CD8-positive, alpha-beta T cell (primary cell): ENCODE measurements at regions of chr22 and their contacts with region 1.

Region 1: GRCh38 chr22:31080848-31081649 is at the start of gene SMTN:
- DNase-seq: peak; percentile 75 to 94 (median 90)
- ATAC-seq: peak; percentile 72
- H3K4me3 ChIP-seq: peak within 1 kb of the TSS; percentile 73 to 81
- H3K4me3 Mint-ChIP-seq: peak within 1 kb of the TSS; percentile 88
- H3K27ac ChIP-seq: no peak within 1 kb of the TSS
- H3K27ac Mint-ChIP-seq: peak within 1 kb of the TSS; percentile 37
- H3K4me1 ChIP-seq: peaks cover 32% of the 10 kb centered on the region
- H3K4me1 Mint-ChIP-seq: peaks cover 36% of the 10 kb centered on the region
- H3K27me3 ChIP-seq: no peaks in the 10 kb centered on the region
- H3K27me3 Mint-ChIP-seq: no peaks in the 10 kb centered on the region
- CTCF ChIP-seq: no peak
- total RNA-seq, gene SMTN: 4.0 to 4.9 TPM

Region 2: GRCh38 chr22:30356449-30357235 is 724.4 kb before region 1 on chr22 and contains the starts of genes CCDC157 and SF3A1:
- CTCF ChIA-PET with region 1: no interaction called
- POLR2A ChIA-PET with region 1: no interaction called
- intact Hi-C with region 1: loop called in 1 of 2 experiments (anchors 10 kb)
- DNase-seq: peak; percentile 74 to 96 (median 87)
- ATAC-seq: peak; percentile 83
- H3K4me3 ChIP-seq: peak within 1 kb of the TSS; percentile 73 to 94
- H3K4me3 Mint-ChIP-seq: peak within 1 kb of the TSS; percentile 92
- H3K27ac ChIP-seq: peak within 1 kb of the TSS; percentile 93 to 99
- H3K27ac Mint-ChIP-seq: peak within 1 kb of the TSS; percentile 93
- H3K4me1 ChIP-seq: peaks cover 44% of the 10 kb centered on the region
- H3K4me1 Mint-ChIP-seq: peaks cover 48% of the 10 kb centered on the region
- H3K27me3 ChIP-seq: no peaks in the 10 kb centered on the region
- H3K27me3 Mint-ChIP-seq: no peaks in the 10 kb centered on the region
- CTCF ChIP-seq: no peak
- total RNA-seq, gene CCDC157: 8.7 to 11.7 TPM
- total RNA-seq, gene SF3A1: 406 to 422 TPM

Region 3: GRCh38 chr22:30634471-30635233 is 446.4 kb before region 1 on chr22:
- CTCF ChIA-PET with region 1: interaction called, 35 read pairs
- POLR2A ChIA-PET with region 1: no interaction called
- intact Hi-C with region 1: loop called (anchors 1 kb)
- DNase-seq: peak; percentile 75 to 95 (median 90)
- ATAC-seq: peak; percentile 64
- H3K4me3 ChIP-seq: peak overlapping the region; percentile 60 to 87
- H3K4me3 Mint-ChIP-seq: peak overlapping the region; percentile 81
- H3K27ac ChIP-seq: peak overlapping the region; percentile 32 to 89
- H3K27ac Mint-ChIP-seq: peak overlapping the region; percentile 91
- H3K4me1 ChIP-seq: peaks cover 31% of the 10 kb centered on the region
- H3K4me1 Mint-ChIP-seq: peaks cover 22% of the 10 kb centered on the region
- H3K27me3 ChIP-seq: no peaks in the 10 kb centered on the region
- H3K27me3 Mint-ChIP-seq: no peaks in the 10 kb centered on the region
- CTCF ChIP-seq: peak; percentile 80

Region 4: DNA sequence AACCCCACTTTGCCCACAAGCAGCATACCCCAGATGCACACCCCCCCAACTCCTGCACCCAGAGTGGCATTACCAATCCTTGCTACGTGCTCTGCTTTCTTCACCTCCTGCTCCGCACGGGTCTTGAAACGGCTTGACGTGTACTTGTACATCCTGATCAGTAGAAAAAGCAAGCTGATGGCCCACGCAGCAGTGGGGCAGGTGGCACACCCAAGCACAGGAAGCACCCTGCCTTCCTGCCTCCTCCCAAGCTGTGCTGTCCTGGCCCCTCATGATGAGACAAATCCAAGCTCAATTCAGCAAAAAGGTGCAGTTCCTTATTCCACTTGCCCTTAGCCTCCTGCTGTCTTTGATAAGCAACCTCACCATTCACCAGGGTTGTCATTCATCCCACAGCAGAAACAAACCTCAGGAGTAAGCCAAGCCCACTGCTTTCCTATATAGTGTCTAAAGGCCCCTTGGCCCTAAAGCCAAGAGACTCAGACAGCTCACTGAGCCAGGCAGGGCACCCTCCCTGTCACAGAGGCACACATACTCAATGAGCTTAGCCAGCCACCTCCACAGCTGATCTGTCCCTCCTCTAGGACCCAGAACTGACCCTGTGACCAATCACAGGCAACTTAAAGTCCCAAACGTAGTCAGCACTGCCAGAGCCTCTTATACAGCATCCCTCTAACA is 140.2 kb before region 1 on chr22:
- CTCF ChIA-PET with region 1: interaction called, 52 read pairs
- POLR2A ChIA-PET with region 1: interaction called, 8 read pairs
- intact Hi-C with region 1: loop called (anchors 1 to 2 kb)
- DNase-seq: peak in 8 of 9 experiments; percentile 35 to 79 (median 48)
- ATAC-seq: peak; percentile 74
- H3K4me3 ChIP-seq: peak overlapping the region; percentile 38
- H3K4me3 Mint-ChIP-seq: peak overlapping the region; percentile 77
- H3K27ac ChIP-seq: peak overlapping the region; percentile 60 to 78
- H3K27ac Mint-ChIP-seq: peak overlapping the region; percentile 90
- H3K4me1 ChIP-seq: peaks cover 74% of the 10 kb centered on the region
- H3K4me1 Mint-ChIP-seq: peaks cover 87% of the 10 kb centered on the region
- H3K27me3 ChIP-seq: no peaks in the 10 kb centered on the region
- H3K27me3 Mint-ChIP-seq: no peaks in the 10 kb centered on the region
- CTCF ChIP-seq: no peak

Region 5: DNA sequence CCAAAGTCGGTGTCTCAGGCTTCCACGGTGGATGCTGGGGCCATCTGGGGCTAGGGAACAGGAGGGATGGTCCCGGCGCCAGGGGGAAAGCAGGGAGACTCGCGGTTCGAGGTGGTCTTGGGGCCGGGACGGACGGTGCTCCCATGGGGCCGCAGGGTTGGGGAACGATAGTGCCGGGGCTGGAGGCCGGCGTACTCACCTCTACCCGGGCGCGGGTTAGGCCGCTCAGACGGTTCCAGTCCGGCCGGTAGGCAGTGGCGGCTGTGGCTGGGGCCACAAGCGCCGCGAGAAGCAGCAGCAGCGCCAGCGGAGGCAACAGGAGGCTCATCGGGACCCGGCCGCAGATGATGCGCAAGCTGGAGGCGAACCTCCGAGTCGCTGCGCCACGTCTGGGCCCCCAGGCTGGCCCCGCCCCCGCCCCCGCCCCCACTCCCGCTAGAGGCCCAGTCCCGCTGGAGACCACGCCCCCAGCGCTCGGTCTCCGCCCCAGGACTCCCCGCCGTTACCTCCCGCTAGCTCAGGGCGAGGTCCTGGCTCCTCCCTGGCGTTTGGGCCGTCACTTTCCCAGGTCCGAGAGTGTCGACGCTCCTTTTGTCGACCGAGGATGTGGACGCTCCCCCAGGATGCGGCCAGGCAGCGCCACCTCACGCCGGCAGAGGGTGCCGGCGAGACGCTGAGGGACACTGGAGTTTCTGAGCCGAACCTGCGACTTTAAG is 26.3 kb after region 1 on chr22 and contains the start of gene SELENOM:
- CTCF ChIA-PET with region 1: interaction called, 4 read pairs
- POLR2A ChIA-PET with region 1: interaction called, 4 read pairs
- intact Hi-C with region 1: loop called (anchors 1 kb)
- DNase-seq: peak; percentile 69 to 94 (median 85)
- ATAC-seq: peak; percentile 96
- H3K4me3 ChIP-seq: peak within 1 kb of the TSS; percentile 80 to 84
- H3K4me3 Mint-ChIP-seq: peak within 1 kb of the TSS; percentile 98
- H3K27ac ChIP-seq: peak within 1 kb of the TSS; percentile 72 to 80
- H3K27ac Mint-ChIP-seq: peak within 1 kb of the TSS; percentile 91
- H3K4me1 ChIP-seq: peaks cover 17% of the 10 kb centered on the region
- H3K4me1 Mint-ChIP-seq: peaks cover 25% of the 10 kb centered on the region
- H3K27me3 ChIP-seq: no peaks in the 10 kb centered on the region
- H3K27me3 Mint-ChIP-seq: no peaks in the 10 kb centered on the region
- CTCF ChIP-seq: peak; percentile 70
- total RNA-seq, gene SELENOM: 55.6 to 62.2 TPM

Region 6: GRCh38 chr22:31290494-31291471 is 209.7 kb after region 1 on chr22:
- CTCF ChIA-PET with region 1: no interaction called
- POLR2A ChIA-PET with region 1: interaction called, 11 read pairs
- intact Hi-C with region 1: no loop called
- DNase-seq: peak; percentile 92 to 99 (median 95)
- ATAC-seq: peak; percentile 72
- H3K4me3 ChIP-seq: peak overlapping the region; percentile 97 to 99
- H3K4me3 Mint-ChIP-seq: peak overlapping the region; percentile 99
- H3K27ac ChIP-seq: peak overlapping the region; percentile 99
- H3K27ac Mint-ChIP-seq: peak overlapping the region; percentile 100
- H3K4me1 ChIP-seq: peaks cover 55% of the 10 kb centered on the region
- H3K4me1 Mint-ChIP-seq: peaks cover 65% of the 10 kb centered on the region
- H3K27me3 ChIP-seq: no peaks in the 10 kb centered on the region
- H3K27me3 Mint-ChIP-seq: no peaks in the 10 kb centered on the region
- CTCF ChIP-seq: no peak